ENCODE measurements at regions of chr4 and their contacts with region 1.

Region 1: GRCh38 chr4:106494066-106494465 is 125.5 kb upstream of the GIMD1 start:
- DNase-seq: no peak
- H3K4me3 ChIP-seq: no peak overlapping the region
- H3K27ac ChIP-seq: no peak overlapping the region
- H3K4me1 ChIP-seq: no peaks in the 10 kb centered on the region
- H3K27me3 ChIP-seq: no peaks in the 10 kb centered on the region
- CTCF ChIP-seq: no peak
- EP300 ChIP-seq: no peak
- POLR2A ChIP-seq: no peak

Region 2: DNA sequence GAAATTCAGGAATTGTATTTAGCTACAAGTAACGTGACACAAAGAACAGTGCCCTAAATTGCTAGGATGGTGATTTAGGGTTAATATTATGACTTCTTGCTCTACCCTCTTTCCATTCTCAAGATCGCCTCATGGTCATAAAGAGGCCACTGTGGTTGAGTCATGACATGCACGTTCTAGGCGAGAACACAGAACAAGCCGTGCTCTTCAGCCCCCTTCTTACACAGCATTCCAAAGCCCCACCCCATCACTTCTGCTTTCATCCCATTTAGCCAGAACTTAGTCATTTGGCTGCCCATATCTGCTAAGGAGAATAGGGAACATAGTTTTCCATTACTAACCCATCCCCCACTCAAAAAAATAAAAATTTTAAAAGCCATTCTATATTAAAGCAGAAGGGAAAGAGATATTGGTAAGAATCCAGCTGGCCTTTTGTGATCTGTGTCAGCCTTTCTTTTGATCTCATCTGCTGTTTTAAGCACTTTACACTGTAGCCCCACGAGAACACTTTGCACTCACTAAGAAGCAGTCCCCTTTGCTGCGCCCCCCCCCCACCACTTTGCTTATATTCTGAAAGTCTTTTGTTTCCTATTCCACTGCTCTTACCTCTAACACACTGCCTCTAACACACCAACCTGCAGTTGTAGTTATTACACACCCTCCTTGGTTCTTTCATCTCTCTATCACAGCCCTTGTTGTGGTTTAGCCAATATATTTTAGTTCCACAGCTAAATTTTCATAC is 570.4 kb before region 1 on chr4:
- in situ Hi-C with region 1: no loop called
- intact Hi-C with region 1: no loop called
- DNase-seq: no peak
- H3K4me3 ChIP-seq: no peak overlapping the region
- H3K27ac ChIP-seq: no peak overlapping the region
- H3K4me1 ChIP-seq: no peaks in the 10 kb centered on the region
- H3K27me3 ChIP-seq: no peaks in the 10 kb centered on the region
- CTCF ChIP-seq: no peak
- EP300 ChIP-seq: no peak
- POLR2A ChIP-seq: no peak

Region 3: GRCh38 chr4:107164962-107165475 is 671.0 kb after region 1 on chr4:
- in situ Hi-C with region 1: no loop called
- intact Hi-C with region 1: loop called (anchors 5 kb)
- DNase-seq: no peak
- H3K4me3 ChIP-seq: no peak overlapping the region
- H3K27ac ChIP-seq: no peak overlapping the region
- H3K4me1 ChIP-seq: no peaks in the 10 kb centered on the region
- H3K27me3 ChIP-seq: no peaks in the 10 kb centered on the region
- CTCF ChIP-seq: no peak
- EP300 ChIP-seq: no peak
- POLR2A ChIP-seq: no peak